Colonic mucosa (tissue), 4 donors: ENCODE measurements at regions of chr4 and their contacts with region 1.

Region 1: DNA sequence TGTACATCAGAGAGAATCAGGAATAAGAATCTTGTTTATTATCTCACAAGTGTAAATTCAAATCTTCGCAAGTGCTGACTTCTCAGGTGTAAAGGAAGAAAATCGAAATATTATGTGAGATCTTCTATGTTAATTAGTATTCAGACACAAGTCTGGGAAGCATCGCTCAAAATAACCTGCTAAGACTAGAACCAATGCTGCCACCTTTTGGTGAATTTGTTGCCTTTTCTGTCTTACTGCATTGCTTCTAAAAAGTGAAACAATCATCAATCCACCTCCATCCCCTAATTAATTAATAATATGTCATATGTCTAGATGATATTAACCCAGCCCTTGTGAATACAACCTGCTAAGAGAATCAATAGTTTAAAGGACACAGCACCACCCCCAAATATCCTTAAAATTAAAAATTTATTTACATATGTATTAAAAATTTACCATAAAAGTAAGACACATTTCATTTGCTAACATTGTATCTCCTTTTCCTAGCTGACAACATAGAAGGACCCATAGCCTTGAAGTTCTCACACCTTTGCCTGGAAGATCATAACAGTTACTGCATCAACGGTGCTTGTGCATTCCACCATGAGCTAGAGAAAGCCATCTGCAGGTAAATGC is 3.5 kb downstream of the EPGN start:
- DNase-seq: peak; percentile 47
- H3K4me3 ChIP-seq: no peak overlapping the region
- H3K27ac ChIP-seq: no peak overlapping the region
- H3K4me1 ChIP-seq: no peaks in the 10 kb centered on the region
- H3K27me3 ChIP-seq: no peaks in the 10 kb centered on the region
- CTCF ChIP-seq: peak; percentile 55

Region 2: DNA sequence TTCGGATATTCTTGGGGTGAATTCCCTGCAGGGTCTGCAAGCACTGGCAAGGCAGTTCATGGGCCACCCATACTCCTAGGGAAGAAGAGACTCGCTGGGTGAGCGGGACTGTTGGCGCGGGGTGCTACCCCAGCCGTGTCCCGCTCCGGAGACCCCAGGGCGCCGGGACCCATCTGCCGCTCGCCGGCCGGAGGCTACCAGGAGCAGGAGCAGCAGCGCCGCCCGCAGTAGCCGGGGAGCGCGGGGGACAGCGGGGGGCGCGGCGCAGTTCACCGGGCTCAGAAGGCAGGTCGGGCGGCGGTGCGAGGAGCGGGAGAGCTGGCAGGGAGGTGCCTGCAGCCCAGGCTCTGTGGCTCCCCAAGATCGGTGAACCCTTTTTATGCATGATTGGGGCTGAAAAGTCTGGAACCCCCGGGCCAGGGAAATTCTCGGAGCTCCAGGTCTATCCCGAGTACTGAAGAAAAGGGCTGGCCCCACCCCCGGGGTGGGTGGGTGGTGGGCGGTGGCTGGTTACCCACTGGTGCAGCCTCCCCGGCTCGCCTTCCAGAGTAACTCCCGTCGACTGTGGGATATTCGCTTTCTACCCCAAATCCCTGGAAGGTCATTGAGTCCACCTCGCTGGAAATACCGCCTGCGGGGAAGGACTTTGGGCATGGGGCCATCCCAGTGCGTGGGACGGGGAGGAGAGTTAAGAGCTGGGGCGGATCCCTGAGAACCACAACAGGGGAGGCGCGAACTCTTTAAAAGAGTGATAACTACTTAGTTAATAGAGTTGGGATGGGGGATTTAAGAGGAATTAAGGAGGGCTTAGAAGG is 367.5 kb before region 1 on chr4:
- intact Hi-C with region 1: no loop called
- DNase-seq: peak; percentile 57
- H3K4me3 ChIP-seq: peak overlapping the region; percentile 41
- H3K27ac ChIP-seq: no peak overlapping the region
- H3K4me1 ChIP-seq: no peaks in the 10 kb centered on the region
- H3K27me3 ChIP-seq: no peaks in the 10 kb centered on the region
- CTCF ChIP-seq: no peak

Region 3: DNA sequence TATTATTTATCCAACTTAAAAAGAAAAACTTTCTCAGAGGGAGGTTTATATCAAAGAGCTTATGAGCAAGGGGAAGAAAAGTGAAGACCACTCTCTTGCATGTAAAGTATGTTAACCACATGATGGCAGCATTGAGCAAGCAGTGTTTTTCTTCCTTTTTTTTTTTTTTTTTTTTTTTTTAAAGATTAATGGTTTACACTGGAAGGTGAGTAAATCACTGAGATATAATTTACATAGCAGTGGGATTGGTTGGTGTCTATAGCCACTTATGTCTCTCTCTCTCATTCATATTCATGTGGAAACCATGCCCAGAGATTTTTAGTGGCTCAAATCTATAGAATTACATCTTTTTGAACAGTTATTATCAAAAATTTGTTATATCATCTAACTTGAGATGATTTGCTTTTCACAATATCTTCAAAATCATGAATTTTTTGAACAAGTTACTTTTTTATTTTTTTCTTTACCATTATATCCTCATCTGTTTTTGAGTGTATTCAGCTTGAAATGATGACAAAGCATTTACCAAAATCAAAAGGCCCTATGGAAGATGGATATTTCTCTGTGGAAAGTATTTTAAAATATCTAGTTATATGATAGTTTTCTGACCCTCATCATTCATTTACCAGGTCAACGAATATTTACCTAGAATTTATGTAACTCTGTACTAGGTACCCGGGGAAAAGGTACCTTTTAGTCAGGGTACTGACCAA is 122.3 kb before region 1 on chr4:
- intact Hi-C with region 1: loop called (anchors 2 kb)
- DNase-seq: no peak
- H3K4me3 ChIP-seq: no peak overlapping the region
- H3K27ac ChIP-seq: no peak overlapping the region
- H3K4me1 ChIP-seq: no peaks in the 10 kb centered on the region
- H3K27me3 ChIP-seq: no peaks in the 10 kb centered on the region
- CTCF ChIP-seq: peak; percentile 68

Region 4: DNA sequence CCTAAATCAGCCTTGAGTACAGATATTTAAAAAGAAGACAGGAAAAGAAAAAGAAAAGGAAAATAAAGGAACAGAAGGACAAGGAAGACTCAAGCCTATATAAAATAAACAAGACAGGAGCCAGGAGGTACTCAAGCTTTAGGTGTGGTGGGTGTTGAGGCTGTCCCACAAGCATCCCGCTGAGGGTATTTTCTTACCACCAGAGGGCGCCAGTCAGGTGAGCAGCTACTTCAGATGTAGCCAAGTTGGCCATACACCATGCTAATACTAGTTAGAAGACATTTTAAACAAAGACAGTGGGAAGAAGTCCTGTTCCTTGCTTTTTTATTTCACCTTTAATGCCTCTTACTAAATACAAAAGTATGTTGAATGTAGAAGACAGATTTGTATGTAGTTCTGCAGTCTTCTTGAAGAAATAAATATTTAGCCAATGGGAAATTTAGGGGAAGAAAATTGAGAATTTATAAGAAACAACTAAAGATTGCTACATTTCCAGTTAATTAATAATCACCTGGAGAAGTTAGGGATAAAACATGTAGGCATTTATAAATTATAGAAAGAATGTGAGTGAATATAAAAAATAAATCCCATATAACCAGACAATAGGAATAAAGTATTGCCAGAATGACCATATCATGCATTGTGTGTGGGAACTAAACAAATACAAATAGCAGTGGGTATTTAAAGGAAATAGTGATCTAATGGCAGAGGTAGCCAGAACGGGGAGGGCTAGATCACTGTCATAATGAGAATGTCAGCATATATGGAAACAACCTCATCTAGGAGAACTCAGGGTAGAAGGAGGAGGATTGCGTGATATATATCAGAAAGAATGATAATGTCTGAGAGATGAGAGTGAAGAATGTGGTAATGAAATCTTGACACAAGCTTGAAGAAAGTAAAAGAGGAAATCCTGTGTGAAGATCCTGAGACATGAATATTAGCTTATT is 82.8 kb before region 1 on chr4:
- intact Hi-C with region 1: loop called (anchors 5 kb)
- DNase-seq: peak; percentile 85
- H3K4me3 ChIP-seq: no peak overlapping the region
- H3K27ac ChIP-seq: no peak overlapping the region
- H3K4me1 ChIP-seq: no peaks in the 10 kb centered on the region
- H3K27me3 ChIP-seq: no peaks in the 10 kb centered on the region
- CTCF ChIP-seq: peak; percentile 89